Activated CD4-positive, alpha-beta T cell treated with anti-CD3 and anti-CD28 coated beads for 36 hours (primary cell): ENCODE measurements at regions of chr11 and their contacts with region 1.

Region 1: GRCh38 chr11:34512840-34513681 is 533 bp downstream of the ELF5 start:
- DNase-seq: peak; percentile 77
- ATAC-seq: peak; percentile 98
- H3K4me3 Mint-ChIP-seq: no peak overlapping the region
- H3K27ac Mint-ChIP-seq: no peak overlapping the region
- H3K4me1 Mint-ChIP-seq: no peaks in the 10 kb centered on the region
- H3K27me3 Mint-ChIP-seq: peaks cover 2% of the 10 kb centered on the region

Region 2: DNA sequence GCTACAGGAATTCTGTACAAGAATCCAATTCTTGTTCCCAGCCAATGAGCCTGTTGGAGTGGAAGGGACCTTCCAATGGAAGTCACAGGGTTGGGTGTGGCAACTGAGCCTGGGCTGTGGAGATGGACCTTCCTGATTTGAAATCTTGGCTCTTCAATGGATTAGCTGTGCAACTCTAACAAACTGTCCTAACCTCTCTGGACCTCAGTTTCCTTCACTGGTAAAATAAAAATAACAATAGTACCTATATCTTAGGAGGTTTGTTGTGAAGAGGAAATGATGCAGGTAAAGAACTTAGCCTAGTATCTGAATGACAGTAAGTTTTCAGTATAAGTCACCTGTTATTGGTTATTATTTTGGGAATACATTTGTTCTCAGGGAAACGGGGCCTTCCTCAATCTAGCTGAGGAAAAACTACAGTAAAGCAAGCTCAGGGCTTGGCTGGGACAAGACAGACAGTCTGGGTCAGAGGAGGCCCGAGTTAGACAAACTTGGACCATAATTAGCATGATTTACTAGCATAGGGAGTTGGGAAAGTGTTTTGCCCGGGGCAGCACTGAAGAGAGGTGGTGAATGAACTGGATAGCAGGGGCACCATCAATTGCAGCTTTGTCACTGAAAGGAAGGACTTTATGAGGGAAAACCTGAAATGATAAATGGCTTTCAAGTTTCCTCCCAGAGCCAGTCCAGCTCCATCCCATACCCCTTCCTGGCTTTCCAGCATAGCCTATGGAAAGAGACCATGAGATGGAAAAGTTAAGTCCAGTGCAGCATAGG is 13.2 kb before region 1 on chr11:
- CTCF ChIA-PET with region 1: interaction called, 16 read pairs
- POLR2A ChIA-PET with region 1: no interaction called
- intact Hi-C with region 1: no loop called
- DNase-seq: no peak
- ATAC-seq: no peak
- H3K4me3 Mint-ChIP-seq: no peak overlapping the region
- H3K27ac Mint-ChIP-seq: no peak overlapping the region
- H3K4me1 Mint-ChIP-seq: no peaks in the 10 kb centered on the region
- H3K27me3 Mint-ChIP-seq: peaks cover 4% of the 10 kb centered on the region

Region 3: DNA sequence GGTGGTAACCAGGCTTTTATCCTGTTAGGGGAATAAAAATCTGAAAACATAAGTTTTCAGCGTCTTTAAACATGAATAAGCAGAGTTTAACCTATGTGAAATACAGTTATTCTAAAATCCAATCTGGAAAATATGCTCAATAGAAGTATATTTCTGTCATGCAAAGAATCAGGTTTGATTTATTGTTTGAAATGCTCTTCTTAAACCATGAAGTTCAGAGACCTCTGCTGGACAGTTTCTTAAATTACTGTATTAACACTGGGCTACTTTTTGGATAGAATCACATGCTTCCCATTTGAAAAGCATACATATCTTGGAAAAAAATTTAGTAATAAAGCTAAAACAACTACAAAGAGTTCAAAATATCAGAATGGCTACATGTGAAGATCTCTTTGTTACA is 377.8 kb after region 1 on chr11:
- CTCF ChIA-PET with region 1: interaction called, 7 read pairs
- POLR2A ChIA-PET with region 1: no interaction called
- intact Hi-C with region 1: loop called in 1 of 2 experiments (anchors 1 kb)
- DNase-seq: no peak
- ATAC-seq: no peak
- H3K4me3 Mint-ChIP-seq: no peak overlapping the region
- H3K27ac Mint-ChIP-seq: no peak overlapping the region
- H3K4me1 Mint-ChIP-seq: no peaks in the 10 kb centered on the region
- H3K27me3 Mint-ChIP-seq: no peaks in the 10 kb centered on the region